Naive thymus-derived CD4-positive, alpha-beta T cell (primary cell): ENCODE measurements at regions of chr6 and their contacts with region 1.

Region 1: GRCh38 chr6:155418017-155418761 is 37.5 kb downstream of the NOX3 start:
- DNase-seq: peak; percentile 9 to 87 (median 68)
- ATAC-seq: peak; percentile 89
- H3K4me3 ChIP-seq: peak overlapping the region; percentile 44
- H3K4me3 Mint-ChIP-seq: peak overlapping the region; percentile 77 to 89 (median 84)
- H3K27ac ChIP-seq: peak overlapping the region; percentile 84
- H3K27ac Mint-ChIP-seq: peak overlapping the region; percentile 93 to 99 (median 97)
- H3K4me1 ChIP-seq: peaks cover 6 to 15% of the 10 kb centered on the region in 2 donors
- H3K4me1 Mint-ChIP-seq: peaks cover 22 to 50% (median 38%) of the 10 kb centered on the region in 7 donors
- H3K27me3 ChIP-seq: no peaks in the 10 kb centered on the region
- H3K27me3 Mint-ChIP-seq: no peaks in the 10 kb centered on the region

Region 2: DNA sequence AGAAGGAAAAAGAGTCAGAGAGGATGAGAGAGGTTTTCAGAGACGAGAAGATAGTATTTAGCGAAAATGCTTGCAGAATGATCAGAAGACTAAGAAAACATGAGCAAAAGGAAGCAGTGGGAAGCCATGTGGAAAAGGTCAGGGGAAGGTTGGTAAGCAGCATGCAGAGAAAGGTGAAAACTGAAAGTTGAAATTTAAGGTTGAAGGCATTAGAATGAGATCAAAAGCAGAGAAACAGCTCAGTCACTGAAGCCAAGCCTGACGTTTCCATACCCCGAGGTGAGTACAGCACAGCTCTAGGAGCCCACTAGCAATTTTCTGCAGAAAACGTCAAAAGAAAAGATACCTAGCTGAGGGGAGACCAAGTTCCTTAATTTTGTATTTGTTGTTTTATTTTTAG is 84.8 kb before region 1 on chr6:
- CTCF ChIA-PET with region 1: interaction called, 3 read pairs
- POLR2A ChIA-PET with region 1: no interaction called
- intact Hi-C with region 1: loop called in 1 of 2 experiments (anchors 1 kb)
- DNase-seq: no peak
- ATAC-seq: no peak
- H3K4me3 ChIP-seq: no peak overlapping the region
- H3K4me3 Mint-ChIP-seq: peak overlapping the region; percentile 7 to 80 (median 41)
- H3K27ac ChIP-seq: peak overlapping the region; percentile 26
- H3K27ac Mint-ChIP-seq: peak overlapping the region; percentile 36 to 86 (median 68)
- H3K4me1 ChIP-seq: peaks cover 0 to 22% of the 10 kb centered on the region in 2 donors
- H3K4me1 Mint-ChIP-seq: peaks cover 12 to 49% (median 32%) of the 10 kb centered on the region in 7 donors
- H3K27me3 ChIP-seq: no peaks in the 10 kb centered on the region
- H3K27me3 Mint-ChIP-seq: no peaks in the 10 kb centered on the region

Region 3: GRCh38 chr6:155366325-155366724 is 51.9 kb before region 1 on chr6:
- CTCF ChIA-PET with region 1: no interaction called
- POLR2A ChIA-PET with region 1: no interaction called
- intact Hi-C with region 1: no loop called
- DNase-seq: no peak
- ATAC-seq: no peak
- H3K4me3 ChIP-seq: no peak overlapping the region
- H3K4me3 Mint-ChIP-seq: no peak overlapping the region
- H3K27ac ChIP-seq: no peak overlapping the region
- H3K27ac Mint-ChIP-seq: no peak overlapping the region
- H3K4me1 ChIP-seq: no peaks in the 10 kb centered on the region
- H3K4me1 Mint-ChIP-seq: no peaks in the 10 kb centered on the region
- H3K27me3 ChIP-seq: no peaks in the 10 kb centered on the region
- H3K27me3 Mint-ChIP-seq: peaks cover 0 to 6% (median 2%) of the 10 kb centered on the region in 5 donors

Region 4: GRCh38 chr6:155444120-155444917 is 26.1 kb after region 1 on chr6:
- CTCF ChIA-PET with region 1: no interaction called
- POLR2A ChIA-PET with region 1: no interaction called
- intact Hi-C with region 1: loop called in 1 of 2 experiments (anchors 2 kb)
- DNase-seq: no peak
- ATAC-seq: no peak
- H3K4me3 ChIP-seq: no peak overlapping the region
- H3K4me3 Mint-ChIP-seq: no peak overlapping the region
- H3K27ac ChIP-seq: no peak overlapping the region
- H3K27ac Mint-ChIP-seq: no peak overlapping the region
- H3K4me1 ChIP-seq: no peaks in the 10 kb centered on the region
- H3K4me1 Mint-ChIP-seq: peaks cover 0 to 16% (median 7%) of the 10 kb centered on the region in 7 donors
- H3K27me3 ChIP-seq: no peaks in the 10 kb centered on the region
- H3K27me3 Mint-ChIP-seq: peaks cover 0 to 4% (median 0%) of the 10 kb centered on the region in 5 donors

Region 5: GRCh38 chr6:155472886-155473285 is 54.7 kb after region 1 on chr6:
- CTCF ChIA-PET with region 1: no interaction called
- POLR2A ChIA-PET with region 1: no interaction called
- intact Hi-C with region 1: no loop called
- DNase-seq: no peak
- ATAC-seq: no peak
- H3K4me3 ChIP-seq: no peak overlapping the region
- H3K4me3 Mint-ChIP-seq: no peak overlapping the region
- H3K27ac ChIP-seq: no peak overlapping the region
- H3K27ac Mint-ChIP-seq: no peak overlapping the region
- H3K4me1 ChIP-seq: no peaks in the 10 kb centered on the region
- H3K4me1 Mint-ChIP-seq: peaks cover 0 to 3% (median 0%) of the 10 kb centered on the region in 7 donors
- H3K27me3 ChIP-seq: no peaks in the 10 kb centered on the region
- H3K27me3 Mint-ChIP-seq: peaks cover 0 to 12% (median 0%) of the 10 kb centered on the region in 5 donors